ENCODE measurements at regions of chr12 and their contacts with region 1.

Region 1: DNA sequence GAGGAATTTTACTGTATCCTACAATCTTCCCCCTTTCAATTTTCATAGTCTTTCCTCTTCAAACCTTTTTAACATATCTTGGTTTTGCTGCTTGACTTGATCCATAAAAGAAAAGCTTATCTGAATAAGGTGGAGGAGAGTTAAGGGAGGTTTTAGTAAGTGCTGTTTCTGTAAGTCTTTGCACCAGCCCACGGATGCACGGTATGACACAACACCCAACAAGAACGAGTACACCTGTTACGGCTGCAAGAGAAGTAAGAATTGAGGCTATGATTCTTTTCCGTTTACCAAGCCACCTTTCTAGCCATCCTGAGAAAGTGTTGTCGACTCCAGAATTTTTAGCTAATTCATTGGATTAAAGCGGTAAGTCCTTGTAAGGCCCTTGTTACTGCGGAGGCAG is 26.1 kb upstream of the CPNE8 start:
- DNase-seq: no peak
- H3K4me3 ChIP-seq: no peak overlapping the region
- H3K27ac ChIP-seq: no peak overlapping the region
- H3K4me1 ChIP-seq: no peaks in the 10 kb centered on the region
- H3K27me3 ChIP-seq: no peaks in the 10 kb centered on the region
- CTCF ChIP-seq: no peak
- EP300 ChIP-seq: no peak
- RAD21 ChIP-seq: no peak

Region 2: GRCh38 chr12:38921025-38921677 is 10.3 kb before region 1 on chr12:
- CTCF ChIA-PET with region 1: interaction called, 13 read pairs
- POLR2A ChIA-PET with region 1: no interaction called
- DNase-seq: peak; percentile 25
- H3K4me3 ChIP-seq: no peak overlapping the region
- H3K27ac ChIP-seq: no peak overlapping the region
- H3K4me1 ChIP-seq: peaks cover 0 to 2% of the 10 kb centered on the region in 2 experiments; a peak in 1 of 4 replicates
- H3K27me3 ChIP-seq: no peaks in the 10 kb centered on the region
- CTCF ChIP-seq: peak; percentile 65
- EP300 ChIP-seq: no peak
- RAD21 ChIP-seq: peak; percentile 78

Region 3: GRCh38 chr12:38961683-38962082 is 30.2 kb after region 1 on chr12:
- CTCF ChIA-PET with region 1: no interaction called
- POLR2A ChIA-PET with region 1: no interaction called
- DNase-seq: no peak
- H3K4me3 ChIP-seq: no peak overlapping the region
- H3K27ac ChIP-seq: no peak overlapping the region
- H3K4me1 ChIP-seq: no peaks in the 10 kb centered on the region
- H3K27me3 ChIP-seq: no peaks in the 10 kb centered on the region
- CTCF ChIP-seq: no peak
- EP300 ChIP-seq: no peak
- RAD21 ChIP-seq: no peak

Measured in SK-N-SH (cell line).